Colonic mucosa (tissue), 4 donors: ENCODE measurements at regions of chr12 and their contacts with region 1.

Region 1: GRCh38 chr12:32365473-32366064 is 33.8 kb upstream of the FGD4 start:
- DNase-seq: peak; percentile 66
- H3K4me3 ChIP-seq: no peak overlapping the region
- H3K27ac ChIP-seq: no peak overlapping the region
- H3K4me1 ChIP-seq: no peaks in the 10 kb centered on the region
- H3K27me3 ChIP-seq: no peaks in the 10 kb centered on the region
- CTCF ChIP-seq: peak; percentile 77

Region 2: DNA sequence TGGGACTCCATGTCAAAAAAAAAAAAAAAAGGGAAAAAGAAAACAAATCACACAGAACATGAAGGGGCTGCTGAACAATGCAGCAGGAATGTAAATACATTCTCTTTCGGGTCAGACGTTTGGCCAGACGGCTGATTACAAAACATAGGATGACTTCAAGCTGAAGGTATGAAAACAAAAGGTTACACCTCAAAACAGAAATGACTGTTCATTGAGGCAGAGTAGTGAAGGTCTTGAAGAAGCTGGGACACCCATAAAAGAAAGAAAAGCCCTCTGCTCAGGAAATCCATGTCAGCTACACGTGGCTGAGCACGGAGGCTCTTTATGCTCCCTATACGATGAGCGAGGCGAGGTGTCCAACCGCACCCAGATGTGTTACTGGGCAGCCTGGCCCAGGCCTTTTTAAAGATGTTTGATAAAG is 71.5 kb after region 1 on chr12:
- intact Hi-C with region 1: no loop called
- DNase-seq: no peak
- H3K4me3 ChIP-seq: no peak overlapping the region
- H3K27ac ChIP-seq: no peak overlapping the region
- H3K4me1 ChIP-seq: no peaks in the 10 kb centered on the region
- H3K27me3 ChIP-seq: no peaks in the 10 kb centered on the region
- CTCF ChIP-seq: no peak

Region 3: GRCh38 chr12:32650508-32650907 is 284.9 kb after region 1 on chr12:
- intact Hi-C with region 1: loop called (anchors 5 kb)
- DNase-seq: no peak
- H3K4me3 ChIP-seq: no peak overlapping the region
- H3K27ac ChIP-seq: no peak overlapping the region
- H3K4me1 ChIP-seq: no peaks in the 10 kb centered on the region
- H3K27me3 ChIP-seq: no peaks in the 10 kb centered on the region
- CTCF ChIP-seq: no peak

Region 4: DNA sequence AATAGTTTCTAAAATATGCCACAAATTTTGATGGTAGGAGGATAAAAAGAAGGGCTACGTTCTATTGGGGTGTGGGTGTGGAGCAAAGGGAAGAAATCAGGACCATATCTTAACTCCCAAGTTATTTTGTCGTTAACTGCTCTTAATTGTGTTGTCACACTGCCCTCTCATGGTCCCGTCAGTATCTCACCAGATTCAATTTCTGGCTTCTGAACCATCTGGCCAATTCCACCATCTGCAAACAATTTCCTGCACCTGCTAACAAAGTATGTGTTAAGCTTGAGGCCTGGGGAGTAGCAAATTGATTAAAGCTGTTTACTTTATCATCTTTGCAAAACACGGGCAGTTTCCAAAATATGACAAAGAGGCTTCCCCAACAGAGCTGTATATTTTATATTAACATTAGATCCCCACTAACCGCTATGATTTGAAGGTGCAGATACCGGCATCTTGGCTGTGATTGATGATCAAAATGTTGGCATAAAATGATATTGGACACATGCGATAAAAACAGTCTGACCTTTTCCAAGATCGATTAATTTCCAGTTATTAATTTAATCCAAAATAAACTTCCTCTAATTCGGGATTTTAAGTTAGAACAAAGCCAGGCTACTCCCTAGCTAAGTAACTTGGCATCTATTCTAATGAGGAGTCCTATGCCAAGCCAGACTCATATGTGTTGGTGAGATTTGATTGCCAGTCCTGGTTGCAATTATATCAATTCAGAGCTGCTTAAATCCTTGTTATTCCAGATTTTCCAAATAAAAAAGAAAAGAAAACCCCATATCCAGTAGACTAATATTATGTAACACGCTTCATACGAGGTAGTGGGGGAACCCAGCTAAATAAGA is 306.6 kb after region 1 on chr12:
- intact Hi-C with region 1: loop called (anchors 5 kb)
- DNase-seq: peak; percentile 51
- H3K4me3 ChIP-seq: no peak overlapping the region
- H3K27ac ChIP-seq: no peak overlapping the region
- H3K4me1 ChIP-seq: no peaks in the 10 kb centered on the region
- H3K27me3 ChIP-seq: no peaks in the 10 kb centered on the region
- CTCF ChIP-seq: peak; percentile 28

Region 5: GRCh38 chr12:34022079-34022830 is 1656.7 kb after region 1 on chr12 and contains the start of gene ALG10:
- intact Hi-C with region 1: loop called (anchors 10 kb)
- DNase-seq: peak; percentile 98
- H3K4me3 ChIP-seq: peak within 1 kb of the TSS; percentile 56
- H3K27ac ChIP-seq: peak within 1 kb of the TSS; percentile 59
- H3K4me1 ChIP-seq: no peaks in the 10 kb centered on the region
- H3K27me3 ChIP-seq: no peaks in the 10 kb centered on the region
- CTCF ChIP-seq: peak; percentile 43
- total RNA-seq, gene ALG10: 5.6 to 10.2 TPM